Dorsolateral prefrontal cortex (tissue), 120 donors: ENCODE measurements at regions of chr21 and their contacts with region 1.

Region 1: DNA sequence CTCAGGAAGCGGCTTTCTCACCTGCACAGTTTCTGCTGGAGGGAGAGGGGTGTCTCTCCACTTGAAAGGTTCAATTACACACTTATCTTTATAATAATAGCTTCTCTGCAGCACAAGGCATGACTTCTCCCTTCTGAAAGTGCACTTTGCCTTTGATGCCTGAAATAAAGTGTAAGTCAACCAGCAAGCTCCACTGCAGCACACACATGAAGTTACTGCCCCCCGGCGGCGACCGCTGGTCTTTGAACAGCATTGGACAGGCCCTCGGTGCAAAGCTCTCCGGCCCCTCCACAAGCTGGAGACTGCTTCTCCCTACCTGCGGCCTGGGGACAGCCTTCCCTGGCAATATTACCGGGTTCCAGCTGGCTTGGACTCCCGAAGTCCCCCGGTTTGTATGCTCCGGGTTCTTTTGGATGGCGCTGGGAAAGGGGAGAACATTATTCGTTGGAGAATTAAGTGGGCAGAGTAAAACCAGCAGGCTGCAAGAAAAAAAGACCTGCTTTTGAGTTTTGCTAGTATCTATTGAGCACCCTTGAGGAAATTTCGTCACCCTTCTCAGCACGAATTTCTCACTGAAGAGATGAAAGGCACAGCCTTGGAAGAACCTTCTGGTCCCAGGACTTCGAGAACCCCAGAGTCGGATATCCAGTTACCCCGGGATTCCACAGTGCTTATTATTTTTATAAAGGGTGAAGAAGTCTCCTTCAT is 11.8 kb downstream of the RCAN1 start:
- DNase-seq: peak; percentile 87 to 96 (median 90)
- H3K4me3 ChIP-seq: peak overlapping the region in 1 of 59 donors; percentile 8
- H3K27ac ChIP-seq: peak overlapping the region in 55 of 59 donors; percentile 0 to 96 (median 79)
- H3K27me3 ChIP-seq: no peaks in the 10 kb centered on the region
- CTCF ChIP-seq: peak; percentile 39 to 93 (median 85)

Region 2: DNA sequence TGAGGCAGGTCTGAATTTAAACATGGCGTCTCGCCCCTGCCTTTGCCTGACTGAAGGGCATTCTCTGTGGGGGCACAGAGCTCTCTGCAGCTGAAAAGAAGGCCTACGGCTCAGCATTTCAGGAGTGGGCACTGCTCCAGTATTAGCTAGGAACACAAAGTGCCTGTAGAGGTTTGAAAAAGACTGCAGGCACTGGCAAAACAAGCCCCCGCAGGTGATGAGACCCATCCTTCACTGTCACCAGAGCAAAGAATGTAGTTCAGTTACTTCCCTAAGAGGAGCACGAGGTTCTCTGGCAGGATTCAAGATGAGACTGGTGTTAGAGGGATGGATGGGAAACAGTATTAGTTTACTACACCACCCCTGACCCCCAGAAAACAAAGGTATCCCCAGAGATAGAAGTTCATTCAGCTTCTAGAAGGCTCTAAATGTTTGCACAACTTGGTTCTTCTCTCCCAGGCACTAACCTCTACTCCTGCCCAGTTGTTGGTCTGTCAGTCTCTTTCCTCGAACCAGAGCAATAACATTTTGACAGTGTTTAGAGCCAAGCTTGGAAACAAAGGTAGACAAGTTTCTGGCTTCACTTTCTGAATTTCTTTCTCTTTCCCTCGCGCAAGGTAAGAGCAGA is 341.2 kb before region 1 on chr21:
- intact Hi-C with region 1: no loop called
- DNase-seq: no peak
- H3K4me3 ChIP-seq: no peak overlapping the region
- H3K27ac ChIP-seq: no peak overlapping the region
- H3K27me3 ChIP-seq: no peaks in the 10 kb centered on the region
- CTCF ChIP-seq: no peak

Region 3: GRCh38 chr21:34526618-34527290 is 76.4 kb before region 1 on chr21:
- intact Hi-C with region 1: loop called in 1 of 2 experiments (anchors 5 kb)
- DNase-seq: peak in 3 of 10 donors; percentile 42 to 46 (median 45)
- H3K4me3 ChIP-seq: peak overlapping the region; percentile 1 to 63 (median 46)
- H3K27ac ChIP-seq: peak overlapping the region in 55 of 59 donors; percentile 14 to 90 (median 70)
- H3K27me3 ChIP-seq: no peaks in the 10 kb centered on the region
- CTCF ChIP-seq: peak in 2 of 56 donors; percentile 6 to 9

Region 4: DNA sequence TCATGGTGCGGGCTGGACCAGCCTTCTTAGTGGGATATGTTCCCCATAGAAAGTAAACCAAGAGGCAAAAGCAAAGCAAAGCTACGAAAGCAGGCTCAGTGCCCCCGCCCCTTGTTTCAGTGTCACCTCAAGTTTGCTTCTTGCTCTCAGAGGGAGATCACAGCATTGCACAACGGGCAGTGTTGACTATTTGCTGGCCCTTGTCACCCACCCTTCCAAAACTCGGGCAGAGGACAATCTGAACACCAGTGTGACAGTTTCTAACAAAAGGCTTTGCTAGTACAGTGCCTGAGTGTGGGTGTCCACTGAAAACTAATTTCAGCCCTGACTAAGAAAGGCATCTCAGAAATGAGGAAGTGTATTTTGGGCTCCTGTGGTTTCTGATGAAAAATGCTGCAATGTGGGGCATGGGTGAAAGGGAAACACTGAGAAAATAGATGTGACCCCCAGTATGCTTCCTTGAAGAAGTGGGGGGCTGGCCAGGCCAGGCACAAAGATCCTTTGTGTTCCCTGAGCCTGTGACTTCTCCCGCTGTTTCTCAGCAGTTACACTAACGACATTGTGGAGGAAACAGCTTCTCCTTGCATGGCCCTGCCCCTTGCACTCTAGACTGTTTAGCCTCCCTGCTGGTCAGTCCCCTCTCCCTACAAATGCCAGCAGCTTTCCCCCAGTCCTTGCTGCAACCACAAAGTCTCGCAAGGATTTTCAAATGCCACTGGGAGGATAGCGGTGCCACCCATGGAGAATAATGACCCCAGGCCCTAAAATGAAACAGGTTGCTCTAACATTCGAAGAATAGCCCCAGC is 57.9 kb before region 1 on chr21:
- intact Hi-C with region 1: loop called in 1 of 2 experiments (anchors 5 kb)
- DNase-seq: peak in 6 of 10 donors; percentile 37 to 63 (median 51)
- H3K4me3 ChIP-seq: peak overlapping the region in 39 of 59 donors; percentile 0 to 57 (median 26)
- H3K27ac ChIP-seq: peak overlapping the region; percentile 32 to 95 (median 81)
- H3K27me3 ChIP-seq: no peaks in the 10 kb centered on the region
- CTCF ChIP-seq: peak in 3 of 56 donors; percentile 7 to 15 (median 8)

Region 5: GRCh38 chr21:34715518-34715917 is 112.4 kb after region 1 on chr21:
- intact Hi-C with region 1: no loop called
- DNase-seq: no peak
- H3K4me3 ChIP-seq: no peak overlapping the region
- H3K27ac ChIP-seq: no peak overlapping the region
- H3K27me3 ChIP-seq: peaks cover 0 to 11% (median 0%) of the 10 kb centered on the region in 45 donors
- CTCF ChIP-seq: no peak